ENCODE measurements at regions of chr2 and their contacts with region 1.

Region 1: GRCh38 chr2:172465417-172466334 is 38.3 kb downstream of the ITGA6 start:
- DNase-seq: peak in 5 of 6 donors; percentile 64 to 82 (median 66)
- ATAC-seq: peak; percentile 71 to 83 (median 76)
- H3K4me3 ChIP-seq: peak overlapping the region in 1 of 4 donors; percentile 8
- H3K27ac ChIP-seq: peak overlapping the region; percentile 16 to 80 (median 46)
- H3K4me1 ChIP-seq: peaks cover 35 to 43% (median 41%) of the 10 kb centered on the region in 3 donors
- H3K27me3 ChIP-seq: no peaks in the 10 kb centered on the region
- CTCF ChIP-seq: peak; percentile 40 to 76 (median 70)

Region 2: DNA sequence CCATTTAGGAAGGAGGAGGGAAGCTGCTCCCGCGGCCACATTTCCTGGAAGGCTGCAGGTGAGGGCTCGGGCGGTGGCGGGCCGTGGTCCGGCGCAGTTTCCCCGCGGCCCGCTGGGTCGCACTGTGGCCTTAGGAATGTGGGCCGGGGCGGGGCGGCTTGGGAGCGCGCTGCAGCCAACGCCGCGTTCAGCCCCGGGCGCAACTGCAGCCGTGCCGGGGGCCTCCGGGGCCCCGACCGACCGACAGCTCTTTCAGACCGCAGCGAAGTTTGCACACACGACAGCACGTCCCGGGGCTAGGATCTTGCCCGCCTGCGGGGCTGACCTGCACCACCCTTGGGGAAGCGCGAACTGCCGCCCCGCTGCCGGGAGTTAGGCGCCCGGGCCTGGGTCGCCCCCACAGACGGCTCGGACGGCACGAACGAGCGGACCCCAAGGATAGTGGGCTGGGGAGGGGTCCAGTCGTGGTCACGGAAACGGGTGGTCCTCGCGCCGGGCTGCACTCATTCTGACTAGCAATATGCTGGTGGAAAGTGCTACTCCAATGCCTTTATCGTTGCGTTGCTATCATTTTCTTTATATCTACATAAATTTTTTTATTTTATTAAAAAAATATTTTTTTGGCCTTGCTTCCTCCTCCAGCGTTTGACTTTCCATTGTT is 293.0 kb before region 1 on chr2:
- intact Hi-C with region 1: loop called in 2 of 3 experiments (anchors 5 to 10 kb)
- DNase-seq: peak; percentile 69 to 93 (median 83)
- ATAC-seq: peak; percentile 99 to 100 (median 100)
- H3K4me3 ChIP-seq: peak overlapping the region; percentile 29 to 68 (median 58)
- H3K27ac ChIP-seq: no peak overlapping the region
- H3K4me1 ChIP-seq: peaks cover 10 to 11% (median 11%) of the 10 kb centered on the region in 3 donors
- H3K27me3 ChIP-seq: no peaks in the 10 kb centered on the region
- CTCF ChIP-seq: peak; percentile 42 to 89 (median 79)

Region 3: DNA sequence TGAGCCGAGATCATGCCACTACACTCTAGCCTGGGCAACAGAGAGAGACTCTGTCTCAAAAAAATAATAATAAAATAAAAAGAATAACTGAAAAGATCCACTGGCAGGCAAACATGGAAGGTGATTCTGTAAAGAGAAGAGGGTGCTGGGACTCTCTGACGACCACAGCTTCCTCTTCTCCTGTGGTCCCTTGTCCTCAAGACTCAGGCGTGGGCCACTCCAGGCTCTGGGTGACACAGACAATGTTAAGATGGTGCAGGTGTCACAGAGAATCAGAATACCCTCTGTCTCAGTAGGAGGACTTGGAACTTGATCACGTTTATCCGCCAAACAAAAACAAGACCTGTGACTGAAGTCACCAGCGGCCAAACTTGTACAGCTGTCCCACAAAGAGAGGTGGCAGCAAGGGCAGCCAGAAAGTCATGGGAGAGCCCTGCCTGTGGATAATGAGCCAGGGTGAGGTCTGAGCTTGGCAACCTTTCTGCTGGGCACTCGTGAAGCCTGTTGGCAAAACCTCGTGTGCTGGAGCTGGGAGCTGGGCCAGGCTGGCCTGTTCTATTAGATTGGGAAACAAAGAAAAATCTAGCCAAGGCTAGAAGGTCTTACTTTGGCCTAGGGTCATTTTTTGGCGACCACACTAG is 114.7 kb before region 1 on chr2:
- intact Hi-C with region 1: loop called in 1 of 3 experiments (anchors 10 kb)
- DNase-seq: peak; percentile 73 to 96 (median 94)
- ATAC-seq: peak; percentile 95 to 98 (median 96)
- H3K4me3 ChIP-seq: no peak overlapping the region
- H3K27ac ChIP-seq: peak overlapping the region; percentile 54 to 93 (median 76)
- H3K4me1 ChIP-seq: peaks cover 39 to 47% (median 46%) of the 10 kb centered on the region in 3 donors
- H3K27me3 ChIP-seq: no peaks in the 10 kb centered on the region
- CTCF ChIP-seq: no peak

Measured in pancreas (tissue), 10 donors.